CD4-positive, alpha-beta memory T cell (primary cell): ENCODE measurements at regions of chr17 and their contacts with region 1.

Region 1: GRCh38 chr17:45247429-45248131 is 14.3 kb downstream of the SPATA32 start:
- DNase-seq: peak; percentile 92 to 99 (median 93)
- H3K4me3 ChIP-seq: peak overlapping the region; percentile 42 to 81
- H3K4me3 Mint-ChIP-seq: peak overlapping the region; percentile 85 to 91 (median 89)
- H3K27ac ChIP-seq: peak overlapping the region; percentile 91
- H3K27ac Mint-ChIP-seq: peak overlapping the region; percentile 94 to 99 (median 98)
- H3K4me1 ChIP-seq: peaks cover 74% of the 10 kb centered on the region
- H3K4me1 Mint-ChIP-seq: peaks cover 24 to 80% (median 51%) of the 10 kb centered on the region in 4 donors
- H3K27me3 ChIP-seq: no peaks in the 10 kb centered on the region
- H3K27me3 Mint-ChIP-seq: no peaks in the 10 kb centered on the region

Region 2: DNA sequence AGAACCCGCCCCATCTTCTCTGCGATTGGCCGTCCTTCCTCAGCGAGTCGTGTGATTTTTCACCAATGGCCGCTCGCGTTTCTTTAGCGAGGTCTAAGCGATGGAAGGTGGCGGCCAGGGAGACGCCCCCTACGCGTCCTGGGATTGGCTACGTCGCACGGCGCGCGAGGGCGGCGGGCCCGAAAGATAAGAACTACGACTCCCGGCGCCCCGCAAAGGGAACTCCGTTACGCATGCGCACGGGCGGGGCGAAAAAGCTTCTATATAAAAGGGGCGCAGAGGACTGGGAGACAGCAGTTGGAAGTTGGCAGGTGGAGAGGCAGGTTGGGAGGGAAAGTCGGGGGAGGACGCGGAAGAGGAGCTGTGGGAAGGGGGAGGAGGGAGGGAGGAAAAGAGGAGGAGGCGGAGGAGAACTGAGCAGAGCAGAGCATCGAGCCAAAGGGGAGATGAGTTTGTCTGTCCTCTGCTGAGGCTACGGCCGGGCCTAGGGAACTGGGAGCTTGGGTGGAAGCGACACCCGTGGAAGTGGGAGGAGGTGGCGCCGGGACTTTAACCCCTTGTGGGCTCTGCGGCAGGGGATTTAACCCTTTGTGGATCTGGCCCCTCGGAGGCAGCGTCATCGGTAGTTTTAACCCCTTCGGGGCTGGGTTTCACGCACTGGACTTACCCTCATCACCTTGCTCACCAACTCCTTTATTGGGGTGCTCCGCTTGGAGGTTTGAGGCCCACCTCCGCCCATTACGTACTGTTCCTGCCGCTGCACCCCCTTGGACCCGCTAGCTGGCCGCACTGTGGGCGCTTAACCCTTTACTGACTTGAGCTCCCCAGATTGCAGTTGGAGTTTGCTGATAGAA is 99.2 kb before region 1 on chr17 and contains the start of gene HEXIM1:
- CTCF ChIA-PET with region 1: interaction called, 5 read pairs
- POLR2A ChIA-PET with region 1: interaction called, 39 read pairs
- intact Hi-C with region 1: loop called (anchors 1 kb)
- DNase-seq: peak; percentile 99 to 100 (median 99)
- H3K4me3 ChIP-seq: peak within 1 kb of the TSS; percentile 90 to 95
- H3K4me3 Mint-ChIP-seq: peak within 1 kb of the TSS; percentile 93 to 99 (median 96)
- H3K27ac ChIP-seq: peak within 1 kb of the TSS; percentile 88
- H3K27ac Mint-ChIP-seq: peak within 1 kb of the TSS; percentile 98 to 100 (median 100)
- H3K4me1 ChIP-seq: peaks cover 59% of the 10 kb centered on the region
- H3K4me1 Mint-ChIP-seq: peaks cover 26 to 61% (median 44%) of the 10 kb centered on the region in 4 donors
- H3K27me3 ChIP-seq: no peaks in the 10 kb centered on the region
- H3K27me3 Mint-ChIP-seq: peaks cover 1 to 5% of the 10 kb centered on the region in 2 donors
- total RNA-seq, gene HEXIM1: 28.8 to 30.8 TPM

Region 3: DNA sequence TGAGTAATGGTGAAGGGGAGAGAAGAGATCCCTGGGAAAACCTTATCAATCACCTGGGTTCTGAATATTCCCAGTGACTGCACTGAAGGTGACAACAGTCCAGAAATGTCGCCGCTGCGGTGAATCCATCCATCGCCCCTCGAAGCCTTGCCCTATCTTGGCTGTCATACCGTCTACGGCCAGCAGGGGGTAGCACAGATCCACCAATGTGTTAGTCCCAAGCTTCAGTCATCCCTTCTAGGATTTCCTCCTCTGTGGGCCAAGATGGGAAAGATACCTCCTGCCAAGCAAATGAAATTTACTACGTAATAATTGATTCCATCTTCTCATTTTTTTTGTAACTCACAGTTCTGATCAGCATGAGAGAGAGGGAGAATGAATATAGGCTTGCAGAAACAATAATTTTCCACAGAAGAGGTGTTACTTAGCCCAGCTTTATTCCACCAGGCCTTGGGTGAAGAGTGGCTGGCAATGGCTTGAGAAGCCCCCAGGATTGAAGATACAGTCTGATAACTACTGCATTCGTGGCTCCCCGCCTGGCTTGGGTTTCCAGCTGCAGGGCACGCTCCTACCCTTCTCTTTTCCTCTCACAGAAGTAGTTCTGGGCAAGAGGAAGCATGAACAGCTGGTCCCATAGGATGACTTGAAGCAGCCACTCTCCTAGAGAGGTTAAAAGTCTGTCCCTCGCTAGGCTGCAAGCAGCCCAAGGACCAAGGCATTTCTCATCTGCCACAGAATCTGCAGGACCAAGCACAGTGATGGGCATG is 28.5 kb before region 1 on chr17:
- CTCF ChIA-PET with region 1: interaction called, 58 read pairs
- POLR2A ChIA-PET with region 1: interaction called, 1,143 read pairs
- intact Hi-C with region 1: no loop called
- DNase-seq: peak; percentile 77 to 84 (median 82)
- H3K4me3 ChIP-seq: peak overlapping the region in 1 of 2 donors; percentile 13
- H3K4me3 Mint-ChIP-seq: peak overlapping the region; percentile 88 to 95 (median 92)
- H3K27ac ChIP-seq: peak overlapping the region; percentile 12
- H3K27ac Mint-ChIP-seq: peak overlapping the region; percentile 84 to 94 (median 91)
- H3K4me1 ChIP-seq: peaks cover 29% of the 10 kb centered on the region
- H3K4me1 Mint-ChIP-seq: peaks cover 21 to 49% (median 24%) of the 10 kb centered on the region in 4 donors
- H3K27me3 ChIP-seq: no peaks in the 10 kb centered on the region
- H3K27me3 Mint-ChIP-seq: no peaks in the 10 kb centered on the region

Region 4: DNA sequence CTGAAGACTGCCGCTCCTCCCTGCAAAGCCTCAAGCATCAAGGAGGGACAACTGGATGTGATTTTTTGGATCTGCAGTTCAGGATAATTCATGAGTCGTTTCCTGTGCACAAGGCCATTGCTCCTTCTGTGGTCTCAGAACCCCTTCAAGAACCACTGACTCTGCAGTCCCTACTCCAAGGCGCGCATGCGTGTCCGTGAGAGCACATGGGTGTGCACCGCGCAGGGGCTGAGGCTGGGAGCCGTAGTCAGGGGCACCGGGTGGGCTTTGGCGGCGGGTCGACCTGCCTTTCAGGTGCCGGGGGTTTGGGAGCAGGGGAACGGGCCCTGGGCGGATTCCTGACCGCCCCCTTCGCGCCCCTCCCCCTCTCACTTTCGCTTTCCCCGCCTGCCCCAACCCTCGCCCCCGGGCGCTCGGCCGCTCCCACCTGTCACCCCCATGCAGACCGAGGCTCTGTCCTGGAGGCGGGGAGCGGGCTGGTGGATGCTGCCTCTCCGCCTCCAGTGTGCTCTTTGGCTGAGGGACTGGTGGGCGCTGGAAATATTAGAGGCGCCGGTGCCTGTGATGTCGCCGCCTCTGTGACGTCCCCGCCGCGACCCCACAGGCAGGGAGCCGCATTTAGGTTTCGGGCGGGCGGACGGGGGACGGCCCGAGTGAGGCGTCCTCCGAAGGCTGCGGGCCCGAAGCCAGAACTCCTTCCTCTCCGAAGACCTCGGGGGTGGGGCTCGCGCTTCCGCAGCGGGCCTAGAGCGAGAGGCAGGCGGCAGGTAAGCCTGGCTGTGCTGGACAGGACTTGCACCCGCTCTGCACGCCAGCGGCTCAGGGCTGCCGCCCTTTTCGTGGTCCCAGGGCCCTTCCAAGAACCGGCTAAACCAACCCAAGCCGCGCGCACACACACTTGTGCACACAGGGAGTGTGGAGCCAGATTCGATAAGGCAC is 14.3 kb after region 1 on chr17 and contains the start of gene SPATA32:
- CTCF ChIA-PET with region 1: interaction called, 6 read pairs
- POLR2A ChIA-PET with region 1: interaction called, 57 read pairs
- intact Hi-C with region 1: loop called (anchors 1 kb)
- DNase-seq: peak; percentile 61 to 76 (median 66)
- H3K4me3 ChIP-seq: peak within 1 kb of the TSS in 1 of 2 donors; percentile 48
- H3K4me3 Mint-ChIP-seq: peak within 1 kb of the TSS; percentile 76 to 88 (median 82)
- H3K27ac ChIP-seq: peak within 1 kb of the TSS; percentile 55
- H3K27ac Mint-ChIP-seq: peak within 1 kb of the TSS; percentile 71 to 91 (median 84)
- H3K4me1 ChIP-seq: peaks cover 26% of the 10 kb centered on the region
- H3K4me1 Mint-ChIP-seq: peaks cover 14 to 42% (median 26%) of the 10 kb centered on the region in 4 donors
- H3K27me3 ChIP-seq: no peaks in the 10 kb centered on the region
- H3K27me3 Mint-ChIP-seq: no peaks in the 10 kb centered on the region
- total RNA-seq, gene SPATA32: 0.22 to 0.41 TPM

Region 5: GRCh38 chr17:45307290-45308015 is 59.9 kb after region 1 on chr17:
- CTCF ChIA-PET with region 1: interaction called, 5 read pairs
- POLR2A ChIA-PET with region 1: interaction called, 130 read pairs
- intact Hi-C with region 1: loop called (anchors 2 kb)
- DNase-seq: peak in 3 of 5 donors; percentile 29 to 69 (median 35)
- H3K4me3 ChIP-seq: no peak overlapping the region
- H3K4me3 Mint-ChIP-seq: peak overlapping the region in 7 of 8 donors; percentile 21 to 68 (median 57)
- H3K27ac ChIP-seq: peak overlapping the region; percentile 43
- H3K27ac Mint-ChIP-seq: peak overlapping the region; percentile 66 to 91 (median 86)
- H3K4me1 ChIP-seq: peaks cover 94% of the 10 kb centered on the region
- H3K4me1 Mint-ChIP-seq: peaks cover 58 to 91% (median 73%) of the 10 kb centered on the region in 4 donors
- H3K27me3 ChIP-seq: no peaks in the 10 kb centered on the region
- H3K27me3 Mint-ChIP-seq: no peaks in the 10 kb centered on the region